Activated CD4-positive, alpha-beta memory T cell treated with anti-CD3 and anti-CD28 coated beads, Interleukin-2, amount 10 ng/mL, durations not matched to agents 7 days and 5 days (primary cell): ENCODE measurements at regions of chr6 and their contacts with region 1.

Region 1: GRCh38 chr6:154156135-154156896 is 117.3 kb downstream of the OPRM1 start:
- DNase-seq: peak; percentile 64
- H3K4me3 Mint-ChIP-seq: peak overlapping the region; percentile 58
- H3K27ac Mint-ChIP-seq: peak overlapping the region; percentile 52
- H3K4me1 Mint-ChIP-seq: peaks cover 27% of the 10 kb centered on the region
- H3K27me3 Mint-ChIP-seq: no peaks in the 10 kb centered on the region

Region 2: DNA sequence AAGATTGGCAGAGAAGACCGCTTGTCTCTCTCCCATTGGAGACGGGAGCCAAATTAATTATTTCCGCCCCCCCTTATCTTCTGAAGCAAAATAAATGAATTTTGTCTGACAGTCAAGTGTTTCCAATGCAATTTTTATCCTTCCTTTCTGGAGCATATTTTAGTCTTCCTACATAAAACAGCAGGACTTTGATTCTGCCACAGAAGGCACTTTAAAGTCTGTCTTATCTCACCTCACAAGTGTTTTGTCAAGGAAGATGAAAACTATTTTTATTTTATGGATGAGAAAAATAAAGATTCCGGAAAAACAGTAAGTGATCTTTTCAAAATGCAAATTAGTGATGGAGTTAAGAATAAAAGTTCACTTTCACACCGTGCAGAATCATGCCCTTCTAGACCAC is 23.1 kb after region 1 on chr6:
- CTCF ChIA-PET with region 1: no interaction called
- POLR2A ChIA-PET with region 1: no interaction called
- DNase-seq: no peak
- H3K4me3 Mint-ChIP-seq: no peak overlapping the region
- H3K27ac Mint-ChIP-seq: no peak overlapping the region
- H3K4me1 Mint-ChIP-seq: no peaks in the 10 kb centered on the region
- H3K27me3 Mint-ChIP-seq: no peaks in the 10 kb centered on the region

Region 3: GRCh38 chr6:154229786-154230185 is 73.5 kb after region 1 on chr6:
- CTCF ChIA-PET with region 1: interaction called, 5 read pairs
- POLR2A ChIA-PET with region 1: interaction called, 10 read pairs
- DNase-seq: peak; percentile 77
- H3K4me3 Mint-ChIP-seq: peak overlapping the region; percentile 71
- H3K27ac Mint-ChIP-seq: peak overlapping the region; percentile 75
- H3K4me1 Mint-ChIP-seq: peaks cover 64% of the 10 kb centered on the region
- H3K27me3 Mint-ChIP-seq: no peaks in the 10 kb centered on the region

Region 4: GRCh38 chr6:154276810-154277628 is 120.7 kb after region 1 on chr6:
- CTCF ChIA-PET with region 1: interaction called, 86 read pairs
- POLR2A ChIA-PET with region 1: interaction called, 8 read pairs
- DNase-seq: no peak
- H3K4me3 Mint-ChIP-seq: peak overlapping the region; percentile 30
- H3K27ac Mint-ChIP-seq: no peak overlapping the region
- H3K4me1 Mint-ChIP-seq: peaks cover 15% of the 10 kb centered on the region
- H3K27me3 Mint-ChIP-seq: no peaks in the 10 kb centered on the region

Region 5: DNA sequence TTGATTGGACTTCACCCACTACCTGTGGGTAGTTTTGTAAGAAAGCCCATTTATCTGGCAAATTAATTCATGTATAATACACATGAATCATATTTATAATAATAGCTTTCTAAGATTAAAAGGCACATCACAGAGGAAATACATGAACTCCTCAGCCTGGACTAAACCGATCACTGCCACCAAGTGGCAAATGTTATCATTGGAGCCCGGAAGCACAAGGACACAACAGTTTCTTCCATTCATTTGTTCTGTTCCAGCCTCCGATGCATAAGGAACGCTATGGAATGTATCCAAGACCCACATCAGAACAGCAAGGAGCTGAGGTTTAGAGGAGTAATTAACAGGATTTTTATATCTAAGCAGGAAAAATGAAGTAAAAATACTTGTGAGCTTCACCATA is 214.2 kb after region 1 on chr6:
- CTCF ChIA-PET with region 1: interaction called, 16 read pairs
- POLR2A ChIA-PET with region 1: no interaction called
- DNase-seq: no peak
- H3K4me3 Mint-ChIP-seq: no peak overlapping the region
- H3K27ac Mint-ChIP-seq: no peak overlapping the region
- H3K4me1 Mint-ChIP-seq: no peaks in the 10 kb centered on the region
- H3K27me3 Mint-ChIP-seq: peaks cover 3% of the 10 kb centered on the region